ENCODE measurements at regions of chr17 and their contacts with region 1.

Region 1: DNA sequence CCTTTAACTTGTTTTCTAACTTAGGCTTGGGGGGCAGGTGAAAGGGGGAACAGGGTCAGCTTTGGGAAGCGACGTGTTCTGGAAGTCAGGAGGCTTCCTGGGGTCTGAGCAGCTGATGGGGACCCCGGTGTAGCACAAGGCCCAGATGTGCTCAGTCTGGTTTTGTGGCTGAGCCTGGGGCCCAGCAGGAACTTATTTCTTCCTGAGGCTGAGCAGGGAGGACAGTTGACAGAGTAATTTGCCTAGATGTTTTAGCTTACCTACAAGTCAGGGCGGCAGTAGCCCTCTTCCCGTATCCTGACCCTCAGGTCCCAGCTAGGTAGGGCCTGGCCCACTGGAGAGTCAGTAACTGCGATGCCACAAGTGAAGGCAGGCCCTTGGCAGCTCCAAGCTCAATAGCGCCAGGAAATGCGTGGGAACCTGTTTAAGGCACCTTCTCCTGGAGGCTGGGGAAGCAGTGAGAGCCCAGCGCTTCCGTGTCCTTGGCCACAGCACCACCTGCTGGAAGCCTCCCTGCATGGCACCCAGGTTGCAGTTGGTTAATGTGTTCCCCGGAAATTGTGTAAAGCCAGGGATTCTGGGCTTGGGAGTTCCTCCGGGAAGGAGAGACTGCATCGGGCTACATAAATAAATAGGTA is 5.2 kb downstream of the CCR7 start:
- DNase-seq: peak; percentile 94
- ATAC-seq: peak; percentile 97
- H3K4me3 ChIP-seq: no peak overlapping the region
- H3K27ac ChIP-seq: peak overlapping the region; percentile 69
- H3K4me1 ChIP-seq: peaks cover 28% of the 10 kb centered on the region
- H3K27me3 ChIP-seq: peaks cover 25% of the 10 kb centered on the region
- CTCF ChIP-seq: peak; percentile 99
- POLR2A ChIP-seq: peak; percentile 62
- RAD21 ChIP-seq: peak; percentile 100

Region 2: DNA sequence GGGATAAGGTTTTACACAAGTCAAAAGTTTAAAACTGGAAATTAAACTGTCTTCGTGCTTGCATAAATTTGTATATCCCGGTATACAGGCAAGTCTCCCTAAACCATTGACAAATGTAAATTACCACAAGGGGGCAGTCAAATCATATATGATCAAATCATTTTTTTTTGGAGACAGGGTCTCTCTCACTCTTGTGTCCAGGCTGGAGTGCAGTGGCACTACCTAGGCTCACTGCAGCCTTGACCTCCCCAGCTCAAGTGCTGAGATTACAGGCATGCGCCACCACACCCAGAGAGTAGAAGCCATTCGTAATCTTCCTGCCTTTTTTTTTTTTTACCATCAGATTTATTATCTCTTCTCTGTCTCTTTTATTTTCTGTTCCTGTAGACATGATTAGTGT is 160.9 kb before region 1 on chr17:
- CTCF ChIA-PET with region 1: interaction called, 3 read pairs
- POLR2A ChIA-PET with region 1: no interaction called
- dilution Hi-C with region 1: no loop called
- in situ Hi-C with region 1: no loop called
- intact Hi-C with region 1: loop called (anchors 1 kb)
- DNase-seq: peak; percentile 74
- ATAC-seq: peak; percentile 75
- H3K4me3 ChIP-seq: no peak overlapping the region
- H3K27ac ChIP-seq: no peak overlapping the region
- H3K4me1 ChIP-seq: no peaks in the 10 kb centered on the region
- H3K27me3 ChIP-seq: no peaks in the 10 kb centered on the region
- CTCF ChIP-seq: peak; percentile 65
- POLR2A ChIP-seq: no peak
- RAD21 ChIP-seq: peak; percentile 59

Region 3: GRCh38 chr17:40480501-40481003 is 79.5 kb before region 1 on chr17:
- CTCF ChIA-PET with region 1: interaction called, 9 read pairs
- POLR2A ChIA-PET with region 1: no interaction called
- dilution Hi-C with region 1: no loop called
- in situ Hi-C with region 1: no loop called
- intact Hi-C with region 1: loop called (anchors 1 kb)
- DNase-seq: no peak
- ATAC-seq: no peak
- H3K4me3 ChIP-seq: no peak overlapping the region
- H3K27ac ChIP-seq: no peak overlapping the region; the same call in 1 of the 2 replicates
- H3K4me1 ChIP-seq: peaks cover 24% of the 10 kb centered on the region
- H3K27me3 ChIP-seq: no peaks in the 10 kb centered on the region
- CTCF ChIP-seq: no peak
- POLR2A ChIP-seq: no peak
- RAD21 ChIP-seq: no peak

Region 4: DNA sequence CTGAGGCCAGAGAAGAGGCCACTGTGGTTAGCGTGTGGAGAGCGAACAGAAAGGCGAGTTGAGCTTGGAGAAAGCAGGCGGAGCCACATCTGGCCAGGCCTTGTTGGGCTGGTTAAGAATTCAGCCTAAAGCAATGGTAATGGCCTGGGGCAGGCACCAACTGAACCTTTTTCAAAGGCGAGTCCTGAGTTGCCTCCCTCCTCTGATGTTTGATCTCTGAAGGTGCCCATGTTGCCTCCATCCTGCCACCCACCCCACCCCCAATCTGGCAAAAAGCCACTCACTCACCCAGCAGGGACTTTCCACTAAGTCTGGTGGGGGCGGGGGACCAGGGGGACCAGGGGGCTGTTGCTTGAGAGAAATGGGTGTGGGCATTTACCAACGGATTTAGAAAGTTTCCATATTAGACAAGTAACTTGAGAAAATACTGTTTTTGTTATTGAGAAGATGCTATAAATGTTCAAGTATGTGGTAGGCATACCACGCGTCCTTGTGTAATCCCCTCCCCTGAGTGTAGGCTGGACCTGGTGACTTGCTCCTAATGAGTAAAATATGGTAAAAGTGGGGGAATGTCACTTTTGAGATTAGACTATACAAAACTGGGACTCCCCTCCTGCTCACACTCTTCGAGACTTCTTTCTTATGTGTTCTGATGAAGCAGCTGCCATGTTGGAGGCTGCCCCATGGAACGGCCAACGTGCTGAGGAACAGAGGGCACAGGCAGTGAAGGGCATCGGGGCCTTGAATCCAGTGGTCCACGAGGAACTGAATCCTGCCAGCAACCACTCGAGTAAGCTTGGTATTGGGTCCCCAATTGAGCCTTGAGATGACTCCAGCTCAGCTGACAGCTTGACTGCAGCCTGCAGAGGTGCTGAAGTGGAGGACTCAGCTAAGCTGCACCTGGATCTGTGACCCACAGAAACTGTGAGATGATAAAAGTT is 28.8 kb before region 1 on chr17:
- CTCF ChIA-PET with region 1: interaction called, 43 read pairs
- POLR2A ChIA-PET with region 1: interaction called, 5 read pairs
- dilution Hi-C with region 1: no loop called
- in situ Hi-C with region 1: no loop called
- intact Hi-C with region 1: loop called (anchors 1 kb)
- DNase-seq: no peak
- ATAC-seq: no peak
- H3K4me3 ChIP-seq: no peak overlapping the region
- H3K27ac ChIP-seq: peak overlapping the region; percentile 21
- H3K4me1 ChIP-seq: peaks cover 37% of the 10 kb centered on the region
- H3K27me3 ChIP-seq: no peaks in the 10 kb centered on the region
- CTCF ChIP-seq: no peak
- POLR2A ChIP-seq: no peak
- RAD21 ChIP-seq: no peak

Region 5: DNA sequence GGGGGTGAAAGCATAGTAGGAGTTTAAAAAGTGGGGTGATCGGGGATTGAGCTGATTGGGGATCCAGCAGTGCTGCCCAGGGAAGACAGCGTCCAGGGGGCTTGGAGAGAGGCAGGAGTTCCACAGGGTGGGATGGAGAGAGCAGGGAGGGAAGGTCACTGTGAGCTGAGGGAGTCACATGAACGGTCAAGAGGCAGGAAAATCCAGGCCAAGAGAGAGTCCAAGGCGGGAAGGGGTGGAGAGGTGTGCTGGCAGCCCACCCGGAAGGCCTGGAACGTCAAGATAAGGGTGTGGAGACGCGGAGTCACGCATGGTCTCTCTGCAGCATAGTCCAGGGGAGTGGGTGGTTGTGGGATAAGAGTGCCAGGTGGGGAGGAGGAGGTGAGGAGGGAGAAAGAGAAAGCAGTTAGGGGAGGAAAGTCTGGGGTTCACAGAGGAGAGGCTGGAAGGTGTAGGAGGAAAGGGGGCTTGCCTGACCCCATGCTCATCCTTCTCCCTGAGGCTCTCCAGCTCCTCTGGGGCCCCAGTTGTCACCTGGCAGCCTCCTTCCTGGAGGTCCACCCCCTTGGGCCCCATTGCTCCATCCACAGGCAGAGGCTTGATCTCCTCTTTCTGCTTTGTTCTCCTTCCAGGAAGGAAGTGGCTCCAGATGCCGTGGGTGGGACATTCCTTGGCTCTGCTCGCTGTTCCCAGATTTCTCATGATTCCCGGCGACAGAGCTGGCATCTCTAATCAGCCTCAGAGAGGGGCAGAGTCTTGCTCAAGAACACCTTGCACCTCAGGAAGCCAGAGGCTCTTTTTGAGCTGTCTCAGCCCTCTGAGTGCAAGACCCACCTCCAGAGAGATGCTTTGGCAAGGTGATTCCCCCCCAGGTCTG is 23.5 kb before region 1 on chr17:
- CTCF ChIA-PET with region 1: interaction called, 43 read pairs
- POLR2A ChIA-PET with region 1: interaction called, 5 read pairs
- dilution Hi-C with region 1: no loop called
- in situ Hi-C with region 1: no loop called
- intact Hi-C with region 1: loop called (anchors 1 kb)
- DNase-seq: peak; percentile 75
- ATAC-seq: peak; percentile 6; the same call in 1 of the 2 replicates
- H3K4me3 ChIP-seq: no peak overlapping the region
- H3K27ac ChIP-seq: peak overlapping the region; percentile 76
- H3K4me1 ChIP-seq: peaks cover 46% of the 10 kb centered on the region
- H3K27me3 ChIP-seq: no peaks in the 10 kb centered on the region
- CTCF ChIP-seq: no peak
- POLR2A ChIP-seq: no peak; the same call in 1 of the 2 replicates
- RAD21 ChIP-seq: no peak